Ascending aorta (tissue), 2 donors: ENCODE measurements at regions of chr11 and their contacts with region 1.

Region 1: GRCh38 chr11:77473801-77474683 is at the start of gene PAK1:
- DNase-seq: peak; percentile 35 to 90
- H3K4me3 ChIP-seq: peak within 1 kb of the TSS; percentile 77 to 82
- H3K27ac ChIP-seq: peak within 1 kb of the TSS in 1 of 2 donors; percentile 20
- H3K4me1 ChIP-seq: peaks cover 0 to 8% of the 10 kb centered on the region in 2 donors
- H3K27me3 ChIP-seq: no peaks in the 10 kb centered on the region
- CTCF ChIP-seq: no peak
- total RNA-seq, gene PAK1: 39.8 TPM

Region 2: GRCh38 chr11:77113382-77114088 is 360.5 kb before region 1 on chr11:
- intact Hi-C with region 1: no loop called
- DNase-seq: no peak
- H3K4me3 ChIP-seq: no peak overlapping the region
- H3K27ac ChIP-seq: no peak overlapping the region
- H3K4me1 ChIP-seq: no peaks in the 10 kb centered on the region
- H3K27me3 ChIP-seq: no peaks in the 10 kb centered on the region
- CTCF ChIP-seq: peak in 1 of 3 experiments; percentile 39

Region 3: GRCh38 chr11:77411717-77412441 is 62.2 kb before region 1 on chr11:
- intact Hi-C with region 1: loop called (anchors 5 kb)
- DNase-seq: peak; percentile 46 to 91
- H3K4me3 ChIP-seq: peak overlapping the region; percentile 56 to 83
- H3K27ac ChIP-seq: peak overlapping the region; percentile 64 to 89
- H3K4me1 ChIP-seq: peaks cover 6 to 8% of the 10 kb centered on the region in 2 donors
- H3K27me3 ChIP-seq: no peaks in the 10 kb centered on the region
- CTCF ChIP-seq: peak in 1 of 3 experiments; percentile 13

Region 4: DNA sequence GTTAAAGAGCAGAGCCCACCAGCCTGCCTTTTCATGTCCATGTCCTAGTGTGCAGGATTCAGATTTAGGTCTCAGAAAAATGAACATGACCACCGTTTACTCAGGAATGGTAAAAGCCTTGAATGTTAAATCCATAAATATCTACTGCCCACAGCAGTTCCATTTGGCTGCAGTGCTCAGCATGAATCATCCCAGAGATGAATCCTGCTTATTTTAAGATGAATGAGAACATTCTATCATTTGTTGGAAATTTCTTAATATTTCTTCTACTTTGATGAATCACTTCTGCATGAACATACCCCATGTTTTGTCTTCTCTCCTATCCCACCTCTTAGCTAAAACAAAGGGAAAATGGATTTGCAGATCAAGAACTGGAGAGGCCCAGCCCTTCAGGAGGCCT is 68.3 kb after region 1 on chr11:
- intact Hi-C with region 1: no loop called
- DNase-seq: no peak
- H3K4me3 ChIP-seq: no peak overlapping the region
- H3K27ac ChIP-seq: no peak overlapping the region
- H3K4me1 ChIP-seq: no peaks in the 10 kb centered on the region
- H3K27me3 ChIP-seq: no peaks in the 10 kb centered on the region
- CTCF ChIP-seq: no peak